Gastrocnemius medialis (tissue), 4 donors: ENCODE measurements at regions of chr12 and their contacts with region 1.

Region 1: GRCh38 chr12:128914908-128915563 is 61.8 kb downstream of the GLT1D1 start:
- DNase-seq: no peak
- ATAC-seq: no peak
- H3K4me3 ChIP-seq: no peak overlapping the region
- H3K27ac ChIP-seq: no peak overlapping the region
- H3K4me1 ChIP-seq: peaks cover 1% of the 10 kb centered on the region in 2 donors
- H3K27me3 ChIP-seq: no peaks in the 10 kb centered on the region
- CTCF ChIP-seq: no peak
- POLR2A ChIP-seq: no peak

Region 2: DNA sequence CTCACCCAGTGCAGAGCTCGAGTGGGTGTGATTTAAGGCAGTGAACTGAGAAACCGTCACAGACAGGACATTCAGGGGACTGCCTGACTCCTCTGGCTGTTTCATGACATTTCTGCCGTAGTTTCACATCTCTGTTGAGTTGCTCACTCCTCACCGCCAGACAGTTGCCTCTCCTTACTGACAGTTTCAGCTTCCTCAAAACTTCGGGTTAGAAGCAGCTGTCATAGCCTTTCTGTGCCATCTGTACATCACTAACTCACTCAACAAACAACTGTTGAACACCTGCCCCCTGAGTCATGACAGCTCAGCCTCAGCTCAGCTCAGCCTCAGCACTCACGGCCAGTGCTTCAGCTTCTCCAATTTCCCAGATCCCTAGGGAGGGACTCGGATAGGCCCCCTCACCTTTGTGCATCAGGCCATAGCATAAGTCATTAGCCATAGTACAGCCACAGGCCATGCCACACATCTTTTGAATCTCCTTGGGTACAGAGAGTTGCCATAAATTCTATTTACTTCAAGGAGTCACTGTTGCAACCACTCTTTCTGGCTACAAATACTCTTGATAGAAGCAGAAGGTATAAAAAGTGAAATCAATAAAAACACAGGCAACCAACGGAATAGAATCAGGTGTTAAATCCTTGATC is 85.1 kb before region 1 on chr12:
- in situ Hi-C with region 1: no loop called
- intact Hi-C with region 1: loop called (anchors 10 kb)
- DNase-seq: peak in 1 of 2 donors; percentile 64
- ATAC-seq: peak; percentile 80 to 83
- H3K4me3 ChIP-seq: no peak overlapping the region
- H3K27ac ChIP-seq: peak overlapping the region; percentile 34 to 77 (median 62)
- H3K4me1 ChIP-seq: peaks cover 10 to 19% of the 10 kb centered on the region in 2 donors
- H3K27me3 ChIP-seq: no peaks in the 10 kb centered on the region
- CTCF ChIP-seq: no peak
- POLR2A ChIP-seq: no peak